AG04450 (cell line): ENCODE measurements at regions of chr7 and their contacts with region 1.

Region 1: GRCh38 chr7:150356265-150356897 is 12.2 kb upstream of the REPIN1 start:
- DNase-seq: no peak
- H3K4me3 ChIP-seq: no peak overlapping the region
- H3K27ac ChIP-seq: no peak overlapping the region
- H3K27me3 ChIP-seq: no peaks in the 10 kb centered on the region
- CTCF ChIP-seq: peak; percentile 81

Region 2: DNA sequence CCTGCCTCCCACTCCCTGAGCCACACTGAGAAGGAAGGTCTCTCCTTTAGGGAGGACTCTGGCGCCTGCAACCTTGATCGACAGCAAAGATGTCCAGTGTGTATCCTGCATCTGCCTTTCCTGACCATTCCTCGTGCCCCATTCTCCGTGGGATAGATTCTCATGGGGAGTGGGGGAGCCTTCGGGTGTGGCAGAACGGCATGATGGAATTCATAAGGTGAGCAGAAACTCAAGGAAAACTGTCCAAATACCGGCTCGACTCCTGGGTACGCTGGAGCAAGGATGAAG is 14.3 kb before region 1 on chr7:
- CTCF ChIA-PET with region 1: interaction called, 17 read pairs
- POLR2A ChIA-PET with region 1: no interaction called
- DNase-seq: no peak
- H3K4me3 ChIP-seq: no peak overlapping the region
- H3K27ac ChIP-seq: no peak overlapping the region
- H3K27me3 ChIP-seq: peaks cover 41% of the 10 kb centered on the region
- CTCF ChIP-seq: no peak

Region 3: GRCh38 chr7:150368096-150368883 is 11.9 kb after region 1 on chr7 and contains the start of gene REPIN1:
- CTCF ChIA-PET with region 1: interaction called, 17 read pairs
- POLR2A ChIA-PET with region 1: interaction called, 3 read pairs
- DNase-seq: peak; percentile 41
- H3K4me3 ChIP-seq: peak within 1 kb of the TSS; percentile 89
- H3K27ac ChIP-seq: peak within 1 kb of the TSS; percentile 83
- H3K27me3 ChIP-seq: no peaks in the 10 kb centered on the region
- CTCF ChIP-seq: no peak
- polyA plus RNA-seq, gene REPIN1: 28.4 and 38.3 TPM in 2 replicates